ENCODE measurements at regions of chr7 and their contacts with region 1.

Region 1: DNA sequence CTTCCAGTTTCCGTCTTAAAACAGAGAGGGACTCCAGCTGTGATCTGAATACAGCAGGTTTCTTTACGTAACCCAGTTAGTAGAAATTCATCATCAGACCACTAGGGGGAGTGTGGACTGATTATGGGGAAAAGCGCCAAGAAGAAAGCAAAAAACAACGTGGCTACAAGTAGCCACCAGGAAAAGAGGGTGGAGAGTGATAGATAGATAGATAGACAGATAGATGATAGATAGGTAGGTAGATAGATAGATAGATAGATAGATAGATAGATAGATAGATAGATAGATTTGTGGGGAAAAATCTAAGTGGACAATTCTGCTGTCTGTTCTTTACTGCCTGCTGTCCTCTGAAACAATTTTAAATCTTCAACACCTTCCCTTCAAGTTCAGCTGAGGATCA is 12.7 kb upstream of the AKR1B10 start:
- DNase-seq: peak in 1 of 5 donors; percentile 23
- H3K4me3 ChIP-seq: no peak overlapping the region
- H3K27ac ChIP-seq: no peak overlapping the region
- H3K4me1 ChIP-seq: no peaks in the 10 kb centered on the region
- H3K27me3 ChIP-seq: no peaks in the 10 kb centered on the region
- CTCF ChIP-seq: peak; percentile 18 to 74 (median 66)
- EP300 ChIP-seq: no peak
- POLR2A ChIP-seq: no peak

Region 2: GRCh38 chr7:134432296-134433152 is 82.1 kb before region 1 on chr7:
- intact Hi-C with region 1: loop called in 2 of 4 experiments (anchors 5 to 10 kb)
- DNase-seq: peak; percentile 79 to 86 (median 82)
- H3K4me3 ChIP-seq: peak overlapping the region; percentile 32
- H3K27ac ChIP-seq: peak overlapping the region in 1 of 2 donors; percentile 72
- H3K4me1 ChIP-seq: peaks cover 4% of the 10 kb centered on the region
- H3K27me3 ChIP-seq: no peaks in the 10 kb centered on the region
- CTCF ChIP-seq: peak; percentile 58 to 94 (median 86)
- EP300 ChIP-seq: no peak
- POLR2A ChIP-seq: peak; percentile 12

Region 3: GRCh38 chr7:134444198-134444871 is 70.3 kb before region 1 on chr7:
- intact Hi-C with region 1: loop called in 2 of 4 experiments (anchors 5 to 10 kb)
- DNase-seq: no peak
- H3K4me3 ChIP-seq: no peak overlapping the region
- H3K27ac ChIP-seq: no peak overlapping the region
- H3K4me1 ChIP-seq: no peaks in the 10 kb centered on the region
- H3K27me3 ChIP-seq: no peaks in the 10 kb centered on the region
- CTCF ChIP-seq: no peak
- EP300 ChIP-seq: no peak
- POLR2A ChIP-seq: no peak

Region 4: DNA sequence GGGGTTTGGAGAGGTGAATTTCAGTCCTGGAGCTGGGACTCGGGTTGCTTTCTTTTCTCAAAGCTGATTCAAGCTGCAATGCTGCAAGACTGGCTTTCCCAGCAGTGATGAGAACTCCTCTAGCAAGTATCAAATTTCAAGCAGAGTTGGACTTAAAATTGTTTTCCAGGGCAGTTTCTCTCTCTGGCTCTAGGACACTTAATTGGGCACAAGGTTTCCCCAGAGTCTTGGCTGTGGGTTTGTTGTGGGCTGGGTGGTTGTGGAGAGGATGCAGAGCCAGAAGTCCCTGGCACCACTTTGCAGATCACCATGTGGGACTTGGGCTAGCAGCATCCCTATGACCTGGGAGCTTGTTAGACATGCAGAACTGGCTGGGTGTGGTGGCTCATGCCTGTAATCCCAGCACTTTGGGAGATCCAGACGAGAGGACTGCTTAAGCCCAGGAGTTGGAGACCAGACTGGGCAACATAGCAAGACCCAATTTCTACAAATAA is 51.0 kb after region 1 on chr7:
- intact Hi-C with region 1: no loop called
- DNase-seq: no peak
- H3K4me3 ChIP-seq: no peak overlapping the region
- H3K27ac ChIP-seq: no peak overlapping the region
- H3K4me1 ChIP-seq: no peaks in the 10 kb centered on the region
- H3K27me3 ChIP-seq: no peaks in the 10 kb centered on the region
- CTCF ChIP-seq: no peak
- EP300 ChIP-seq: no peak
- POLR2A ChIP-seq: no peak

Region 5: GRCh38 chr7:134605973-134606923 is 91.6 kb after region 1 on chr7:
- intact Hi-C with region 1: loop called in 3 of 4 experiments (anchors 10 kb)
- DNase-seq: peak; percentile 34 to 74 (median 66)
- H3K4me3 ChIP-seq: no peak overlapping the region
- H3K27ac ChIP-seq: no peak overlapping the region
- H3K4me1 ChIP-seq: no peaks in the 10 kb centered on the region
- H3K27me3 ChIP-seq: no peaks in the 10 kb centered on the region
- CTCF ChIP-seq: peak; percentile 63 to 79 (median 69)
- EP300 ChIP-seq: no peak
- POLR2A ChIP-seq: no peak

Region 6: GRCh38 chr7:135385209-135385608 is 870.5 kb after region 1 on chr7:
- intact Hi-C with region 1: no loop called
- DNase-seq: peak; percentile 26 to 46 (median 27)
- H3K4me3 ChIP-seq: no peak overlapping the region
- H3K27ac ChIP-seq: no peak overlapping the region
- H3K4me1 ChIP-seq: no peaks in the 10 kb centered on the region
- H3K27me3 ChIP-seq: no peaks in the 10 kb centered on the region
- CTCF ChIP-seq: no peak
- EP300 ChIP-seq: no peak
- POLR2A ChIP-seq: no peak

Measured in ovary (tissue), 10 donors.